Activated T-helper 2 cell treated with anti-CD3 and anti-CD28 coated beads, Interferon-gamma antibody, Interleukin-2, Interleukin-4, amounts not matched to agents 10 μg/mL and 5 μg/mL and 100 μg/mL, durations not matched to agents 14 hours and 24 hours and 36 hours (primary cell): ENCODE measurements at regions of chr10 and their contacts with region 1.

Region 1: DNA sequence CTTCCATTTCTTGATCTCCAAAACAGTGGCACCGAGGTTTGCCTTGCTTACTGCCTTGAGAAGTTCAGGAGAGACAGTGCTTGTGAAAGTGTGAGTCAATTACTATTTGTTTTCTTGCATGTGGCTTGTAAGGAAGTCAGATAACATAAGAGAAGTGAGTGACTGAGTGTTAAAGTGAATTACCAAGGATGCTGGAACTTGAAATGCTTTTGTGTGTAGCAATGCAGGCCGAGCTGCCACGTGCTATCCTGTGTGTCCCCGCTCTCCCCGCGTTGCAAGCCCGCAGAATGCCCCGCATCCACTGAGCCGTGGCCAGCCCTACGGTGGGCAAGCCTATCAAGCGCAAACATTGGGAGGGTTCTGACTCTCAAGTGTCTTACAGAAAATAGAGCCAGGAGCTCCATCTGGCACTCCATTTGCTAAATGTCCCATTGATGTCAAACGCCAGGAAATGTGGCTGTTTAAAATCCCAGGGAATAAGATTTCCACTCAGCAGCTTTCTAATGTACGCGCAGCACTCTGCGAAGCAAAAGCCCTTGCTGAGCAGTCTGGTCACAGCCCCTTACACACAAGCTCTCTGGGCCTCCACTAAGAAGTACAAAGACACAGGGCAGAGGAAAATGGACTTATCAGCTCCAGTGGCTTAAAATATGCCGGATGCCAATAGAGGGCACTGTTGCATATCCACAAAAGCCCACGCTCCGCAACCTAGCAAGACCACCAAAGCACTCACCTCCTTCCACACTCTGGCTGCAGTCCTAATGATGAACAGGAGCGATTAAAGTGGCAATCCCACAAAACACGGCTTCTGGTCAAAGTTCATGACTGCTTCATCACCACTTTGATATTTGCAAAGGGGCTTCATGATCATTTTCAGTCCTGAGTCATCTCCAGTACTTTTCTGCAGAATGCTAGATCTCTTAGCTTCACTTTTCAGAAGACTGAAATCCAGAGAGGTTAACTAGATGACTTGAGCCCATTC is 158.0 kb upstream of the ITGB1 start:
- DNase-seq: no peak
- H3K4me3 Mint-ChIP-seq: peak overlapping the region; percentile 9
- H3K27ac Mint-ChIP-seq: peak overlapping the region; percentile 71
- H3K4me1 Mint-ChIP-seq: peaks cover 76% of the 10 kb centered on the region
- H3K27me3 Mint-ChIP-seq: no peaks in the 10 kb centered on the region

Region 2: DNA sequence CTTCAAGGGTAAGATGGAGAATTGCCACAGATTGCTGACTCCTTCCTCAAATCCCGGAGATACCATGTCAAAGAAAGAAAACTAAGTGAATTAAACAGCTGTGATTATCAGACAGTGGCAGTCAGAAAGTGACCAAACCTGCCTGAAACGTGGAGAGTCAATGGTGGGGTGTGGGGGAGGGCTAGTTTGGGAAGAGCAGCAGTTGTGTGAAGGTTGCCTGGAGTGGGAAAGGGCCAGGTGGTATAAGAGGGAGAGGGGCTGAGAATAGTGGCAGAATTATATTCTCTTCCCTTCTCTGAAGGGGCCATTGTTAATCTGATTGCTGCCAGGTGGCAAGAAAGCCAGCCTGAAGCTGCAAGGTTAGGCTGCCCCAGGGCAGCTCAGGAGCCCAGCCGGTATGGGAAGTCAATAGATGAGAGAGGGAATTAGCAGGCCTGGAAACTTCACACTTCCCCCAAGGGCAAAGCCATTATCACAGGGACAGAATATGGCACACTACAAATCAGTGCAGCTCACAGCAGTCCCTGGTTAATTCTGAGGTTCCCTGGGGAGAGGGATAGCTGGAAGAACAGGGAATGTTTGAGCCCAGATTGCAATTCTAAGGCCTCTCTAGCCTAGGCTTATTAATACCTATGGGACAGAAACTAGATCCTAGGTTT is 74.1 kb before region 1 on chr10:
- intact Hi-C with region 1: no loop called
- DNase-seq: no peak
- H3K4me3 Mint-ChIP-seq: no peak overlapping the region
- H3K27ac Mint-ChIP-seq: no peak overlapping the region
- H3K4me1 Mint-ChIP-seq: no peaks in the 10 kb centered on the region
- H3K27me3 Mint-ChIP-seq: peaks cover 8% of the 10 kb centered on the region

Region 3: GRCh38 chr10:33098951-33099663 is 16.9 kb before region 1 on chr10:
- intact Hi-C with region 1: loop called (anchors 1 kb)
- DNase-seq: no peak
- H3K4me3 Mint-ChIP-seq: no peak overlapping the region
- H3K27ac Mint-ChIP-seq: peak overlapping the region; percentile 86
- H3K4me1 Mint-ChIP-seq: peaks cover 28% of the 10 kb centered on the region
- H3K27me3 Mint-ChIP-seq: no peaks in the 10 kb centered on the region

Region 4: GRCh38 chr10:33134011-33134751 is 18.2 kb after region 1 on chr10:
- intact Hi-C with region 1: loop called (anchors 1 kb)
- DNase-seq: peak; percentile 64
- H3K4me3 Mint-ChIP-seq: peak overlapping the region; percentile 18
- H3K27ac Mint-ChIP-seq: peak overlapping the region; percentile 84
- H3K4me1 Mint-ChIP-seq: peaks cover 65% of the 10 kb centered on the region
- H3K27me3 Mint-ChIP-seq: no peaks in the 10 kb centered on the region

Region 5: GRCh38 chr10:33143160-33143728 is 27.2 kb after region 1 on chr10:
- intact Hi-C with region 1: loop called (anchors 1 kb)
- DNase-seq: no peak
- H3K4me3 Mint-ChIP-seq: no peak overlapping the region
- H3K27ac Mint-ChIP-seq: peak overlapping the region; percentile 76
- H3K4me1 Mint-ChIP-seq: peaks cover 40% of the 10 kb centered on the region
- H3K27me3 Mint-ChIP-seq: no peaks in the 10 kb centered on the region

Region 6: DNA sequence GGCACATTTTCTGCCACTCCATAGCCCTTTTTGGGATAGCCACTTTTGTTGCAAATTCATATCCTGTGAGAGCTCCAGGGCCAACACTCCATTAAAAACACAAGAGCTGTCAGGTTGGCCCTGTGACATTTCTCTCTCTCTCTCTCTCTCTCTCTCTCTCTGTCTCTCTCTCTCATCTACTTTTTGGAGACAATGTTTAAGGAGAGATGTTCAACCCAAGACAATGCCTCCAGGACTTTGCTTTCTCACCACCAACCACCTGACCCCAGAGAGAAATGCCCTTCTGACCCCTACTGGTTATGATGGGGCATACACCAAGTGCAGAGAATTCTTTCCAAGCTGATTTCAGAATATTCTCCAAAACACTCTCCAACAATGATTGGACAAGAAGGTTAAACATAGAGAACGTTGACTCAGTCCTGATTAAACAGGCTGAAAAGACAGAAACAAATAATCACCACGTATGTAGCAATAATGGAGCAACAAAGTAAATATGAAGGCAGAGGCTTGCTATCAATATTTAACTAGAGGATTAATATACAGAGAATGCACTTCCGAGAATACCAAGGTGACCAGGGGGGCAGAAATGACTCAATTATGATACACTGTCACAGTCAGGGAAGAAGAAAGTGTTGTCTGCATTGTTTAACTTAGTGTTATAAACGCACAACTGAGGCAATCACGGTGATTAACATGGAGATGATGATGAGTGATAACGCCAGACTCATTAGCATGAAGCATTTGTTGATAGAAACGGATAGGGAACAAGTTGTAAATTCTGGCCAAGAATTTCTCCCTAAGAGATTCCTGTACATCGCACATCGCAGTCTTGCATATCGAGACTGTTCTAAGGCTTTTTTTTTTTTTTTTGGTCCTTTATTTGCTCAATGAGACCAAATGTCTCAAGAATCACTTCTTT is 40.0 kb after region 1 on chr10:
- intact Hi-C with region 1: loop called (anchors 1 kb)
- DNase-seq: no peak
- H3K4me3 Mint-ChIP-seq: no peak overlapping the region
- H3K27ac Mint-ChIP-seq: peak overlapping the region; percentile 44
- H3K4me1 Mint-ChIP-seq: peaks cover 43% of the 10 kb centered on the region
- H3K27me3 Mint-ChIP-seq: no peaks in the 10 kb centered on the region

Region 7: GRCh38 chr10:33211106-33211878 is 95.3 kb after region 1 on chr10:
- intact Hi-C with region 1: no loop called
- DNase-seq: no peak
- H3K4me3 Mint-ChIP-seq: peak overlapping the region; percentile 34
- H3K27ac Mint-ChIP-seq: peak overlapping the region; percentile 72
- H3K4me1 Mint-ChIP-seq: peaks cover 22% of the 10 kb centered on the region
- H3K27me3 Mint-ChIP-seq: no peaks in the 10 kb centered on the region